ENCODE measurements at regions of chr20 and their contacts with region 1.

Region 1: DNA sequence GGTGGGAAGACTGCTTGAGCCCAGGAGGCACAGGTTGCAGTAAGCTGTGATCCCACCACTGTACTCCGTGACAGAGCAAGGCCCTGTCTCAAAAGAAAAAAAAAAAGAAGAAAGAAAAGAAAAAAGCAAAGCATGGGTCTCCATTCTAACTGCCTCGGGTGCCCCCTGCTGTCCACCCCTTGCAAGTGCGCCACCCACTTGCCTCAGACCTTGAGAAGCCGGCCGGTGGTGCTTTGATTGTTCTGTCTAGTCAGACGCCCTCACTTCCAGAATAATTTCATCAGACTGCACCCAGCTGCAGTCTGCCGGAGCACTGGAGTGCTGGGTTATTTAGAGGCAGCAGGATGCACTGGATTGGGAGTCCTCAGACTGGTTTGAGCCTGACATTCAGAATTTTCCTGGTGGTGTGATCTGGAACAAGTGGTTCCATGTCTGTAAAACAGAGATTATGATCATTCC is 17.6 kb upstream of the TM9SF4 start:
- DNase-seq: no peak
- H3K4me3 ChIP-seq: no peak overlapping the region
- H3K27me3 ChIP-seq: peaks cover 12% of the 10 kb centered on the region
- CTCF ChIP-seq: peak; percentile 96

Region 2: GRCh38 chr20:31341470-31341869 is 750.4 kb before region 1 on chr20:
- CTCF ChIA-PET with region 1: no interaction called
- POLR2A ChIA-PET with region 1: no interaction called
- DNase-seq: no peak
- H3K4me3 ChIP-seq: no peak overlapping the region
- H3K27me3 ChIP-seq: no peaks in the 10 kb centered on the region
- CTCF ChIP-seq: no peak

Region 3: DNA sequence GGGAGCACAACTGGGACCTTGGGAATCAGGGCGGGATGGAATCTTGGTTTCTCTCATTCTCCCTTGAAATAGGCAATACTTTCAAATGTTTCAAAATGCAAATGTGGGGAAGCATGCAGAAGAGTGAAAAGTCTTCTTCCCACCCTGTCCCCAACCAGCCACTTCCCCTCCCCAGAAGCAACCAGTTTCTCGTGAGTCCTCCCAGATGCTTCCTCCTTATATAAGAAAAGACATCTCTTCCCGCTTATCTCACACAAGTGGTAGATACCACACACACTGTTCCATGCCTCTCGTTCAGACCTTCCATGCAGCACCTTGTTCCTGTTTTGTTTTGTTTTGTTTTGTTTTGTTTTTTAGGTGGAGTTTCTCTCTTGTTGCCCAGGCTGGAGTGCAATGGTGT is 14.7 kb before region 1 on chr20:
- CTCF ChIA-PET with region 1: interaction called, 13 read pairs
- POLR2A ChIA-PET with region 1: no interaction called
- DNase-seq: no peak
- H3K4me3 ChIP-seq: no peak overlapping the region
- H3K27me3 ChIP-seq: peaks cover 15% of the 10 kb centered on the region
- CTCF ChIP-seq: no peak

Region 4: DNA sequence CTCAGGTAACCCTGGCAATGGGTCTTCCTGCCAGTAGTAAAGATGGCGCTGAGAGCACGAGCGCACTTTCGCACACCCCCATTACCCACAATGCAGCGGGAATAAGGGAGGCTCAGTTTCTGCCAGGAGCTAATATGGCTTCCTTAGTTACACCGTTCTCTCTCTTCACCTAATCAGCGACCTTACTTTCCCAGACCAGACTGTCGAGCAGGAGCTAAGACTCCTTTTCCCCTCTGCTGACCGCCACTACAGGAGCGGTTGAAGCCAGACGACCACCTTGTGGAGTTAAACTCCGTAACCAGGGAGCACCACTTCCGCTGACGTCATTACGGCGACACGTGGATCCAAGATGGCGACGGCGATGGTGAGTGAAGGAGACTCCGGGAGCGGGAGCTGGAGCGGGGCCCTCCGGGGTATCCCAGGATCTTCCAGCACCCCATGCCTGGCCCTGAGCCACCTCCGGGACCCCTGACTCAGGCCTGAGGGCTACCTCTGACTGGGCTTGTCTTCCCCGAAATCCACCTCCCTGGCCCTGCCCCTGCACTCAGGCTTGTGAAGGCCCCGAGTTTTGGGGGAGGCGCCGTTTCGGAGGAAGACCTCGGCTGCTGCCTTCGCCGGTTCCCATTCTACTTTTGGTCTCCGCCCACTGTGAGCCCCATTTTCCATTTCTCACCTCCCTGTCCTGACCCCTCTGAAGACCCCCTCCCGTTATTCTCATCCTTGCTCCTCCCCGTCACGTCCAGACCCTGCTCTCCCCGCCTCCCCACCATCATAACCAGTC is 17.7 kb after region 1 on chr20 and contains the start of gene TM9SF4:
- CTCF ChIA-PET with region 1: interaction called, 15 read pairs
- POLR2A ChIA-PET with region 1: no interaction called
- DNase-seq: peak; percentile 60
- H3K4me3 ChIP-seq: peak within 1 kb of the TSS; percentile 83
- H3K27me3 ChIP-seq: no peaks in the 10 kb centered on the region
- CTCF ChIP-seq: no peak
- polyA plus RNA-seq, gene TM9SF4: 97.4 and 101 TPM in 2 replicates

Region 5: GRCh38 chr20:32277361-32278198 is 185.7 kb after region 1 on chr20 and contains the start of gene KIF3B:
- CTCF ChIA-PET with region 1: no interaction called
- POLR2A ChIA-PET with region 1: no interaction called
- DNase-seq: peak; percentile 31
- H3K4me3 ChIP-seq: peak within 1 kb of the TSS; percentile 85
- H3K27me3 ChIP-seq: no peaks in the 10 kb centered on the region
- CTCF ChIP-seq: no peak
- polyA plus RNA-seq, gene KIF3B: 20.9 and 25.2 TPM in 2 replicates

Measured in BJ (cell line).